ENCODE measurements at regions of chr5 and their contacts with region 1.

Region 1: DNA sequence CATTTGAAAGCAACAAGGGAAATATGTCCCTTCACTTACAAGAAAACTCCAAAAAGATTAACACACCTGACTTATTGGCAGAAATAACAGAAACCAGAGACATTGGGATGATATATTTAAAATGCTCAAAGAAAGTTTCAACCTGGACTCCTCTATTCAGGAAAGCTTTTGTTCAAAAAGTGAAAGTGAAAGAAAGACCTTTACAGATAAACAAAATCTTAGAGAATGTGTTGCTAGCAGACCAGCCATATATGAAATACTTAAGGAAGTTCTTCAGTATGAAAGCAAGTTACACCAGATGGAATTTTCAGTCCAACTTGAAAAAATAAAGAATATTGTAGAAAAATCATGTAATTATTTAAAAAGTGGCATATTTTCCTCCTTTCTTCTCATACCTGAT is 1075.1 kb downstream of the NR2F1-AS1 start:
- DNase-seq: peak; percentile 45
- H3K4me3 ChIP-seq: no peak overlapping the region
- H3K27ac ChIP-seq: peak overlapping the region; percentile 37
- H3K4me1 ChIP-seq: peaks cover 19% of the 10 kb centered on the region
- H3K27me3 ChIP-seq: no peaks in the 10 kb centered on the region
- CTCF ChIP-seq: no peak
- POLR2A ChIP-seq: no peak

Region 2: DNA sequence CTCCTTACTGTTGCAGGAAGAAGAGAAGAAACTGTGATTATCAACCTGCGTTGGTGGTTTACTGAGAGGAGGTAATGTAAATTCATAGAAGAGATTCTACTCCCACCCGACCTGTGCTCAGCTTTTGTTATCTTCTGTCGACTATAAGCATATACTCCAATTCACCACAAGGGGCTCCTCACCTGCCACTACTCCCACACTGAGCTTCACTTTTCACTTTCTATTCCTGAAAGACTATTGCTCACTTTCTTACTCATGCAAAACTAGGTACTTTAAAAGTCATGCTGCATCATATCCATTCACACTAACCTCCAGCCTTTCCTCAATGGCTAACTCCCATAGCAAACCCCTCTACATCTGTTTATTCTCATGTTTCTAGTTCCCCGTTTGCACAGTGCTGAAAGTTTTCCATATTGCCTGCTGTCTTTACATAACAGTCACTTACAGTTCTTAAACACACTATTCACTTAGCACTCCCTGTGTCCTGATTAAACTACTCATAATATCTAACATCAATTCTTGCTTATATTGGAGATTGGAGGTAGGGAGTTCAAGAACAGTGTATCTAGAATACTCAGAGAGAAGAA is 12.5 kb after region 1 on chr5:
- CTCF ChIA-PET with region 1: interaction called, 19 read pairs
- POLR2A ChIA-PET with region 1: no interaction called
- dilution Hi-C with region 1: no loop called
- intact Hi-C with region 1: no loop called
- DNase-seq: peak; percentile 50
- H3K4me3 ChIP-seq: no peak overlapping the region
- H3K27ac ChIP-seq: no peak overlapping the region
- H3K4me1 ChIP-seq: no peaks in the 10 kb centered on the region
- H3K27me3 ChIP-seq: no peaks in the 10 kb centered on the region
- CTCF ChIP-seq: peak; percentile 47 to 69
- POLR2A ChIP-seq: no peak

Region 3: DNA sequence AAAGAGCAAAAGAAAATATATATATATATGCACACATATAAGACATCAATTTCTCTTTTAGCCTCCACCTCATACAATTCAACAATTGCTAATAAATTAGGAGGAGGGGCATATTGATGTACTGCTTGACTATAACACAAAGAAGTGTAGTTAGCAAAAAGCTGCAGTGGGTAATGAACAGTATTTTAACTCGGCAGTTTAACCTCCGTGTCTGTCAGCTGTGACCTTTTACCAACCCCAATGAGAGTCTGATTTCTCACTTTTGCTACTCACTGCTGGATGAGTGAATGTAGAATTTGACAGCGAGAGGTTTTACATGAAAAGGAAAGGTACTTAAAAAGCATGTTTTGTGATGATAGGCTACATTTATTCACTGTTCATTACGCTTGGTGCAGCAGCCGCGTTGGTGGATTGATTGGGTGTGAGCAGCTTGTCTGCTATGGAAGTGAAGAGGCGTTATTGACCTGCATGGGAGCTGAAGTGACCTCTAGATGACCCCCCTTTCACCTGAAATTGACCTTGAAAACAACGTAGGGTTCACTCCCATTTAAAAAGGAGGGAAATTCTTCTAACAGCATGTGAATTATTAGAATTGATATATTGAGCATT is 207.4 kb after region 1 on chr5:
- CTCF ChIA-PET with region 1: no interaction called
- POLR2A ChIA-PET with region 1: no interaction called
- dilution Hi-C with region 1: no loop called
- intact Hi-C with region 1: no loop called
- DNase-seq: no peak
- H3K4me3 ChIP-seq: no peak overlapping the region
- H3K27ac ChIP-seq: no peak overlapping the region
- H3K4me1 ChIP-seq: no peaks in the 10 kb centered on the region
- H3K27me3 ChIP-seq: no peaks in the 10 kb centered on the region
- CTCF ChIP-seq: no peak
- POLR2A ChIP-seq: no peak

Measured in endothelial cell of umbilical vein (primary cell).